Posterior vena cava (tissue), 2 donors: ENCODE measurements at regions of chr7 and their contacts with region 1.

Region 1: GRCh38 chr7:4267341-4268051 is 414.6 kb upstream of the FOXK1 start:
- DNase-seq: no peak

Region 2: DNA sequence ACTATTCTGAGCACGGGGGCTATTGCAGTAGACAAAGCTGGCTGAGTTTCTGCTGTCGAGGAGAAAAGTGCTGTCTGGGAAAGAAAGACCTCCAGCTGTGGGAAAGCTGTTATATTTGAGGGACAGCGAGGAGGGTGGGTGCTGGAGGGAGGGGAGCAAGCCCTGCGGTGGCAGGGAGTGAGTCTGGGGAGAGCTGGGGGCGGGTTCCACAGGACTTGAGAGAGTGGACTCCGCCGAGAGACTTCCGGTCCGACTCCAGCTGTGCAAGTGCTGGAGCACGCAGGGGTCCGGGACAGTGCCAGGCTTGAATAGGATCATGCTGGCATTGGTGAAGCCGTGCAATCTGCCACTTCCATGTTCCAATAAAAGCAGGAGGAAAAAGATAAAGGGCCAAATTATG is 187.5 kb before region 1 on chr7:
- intact Hi-C with region 1: no loop called
- DNase-seq: no peak

Region 3: DNA sequence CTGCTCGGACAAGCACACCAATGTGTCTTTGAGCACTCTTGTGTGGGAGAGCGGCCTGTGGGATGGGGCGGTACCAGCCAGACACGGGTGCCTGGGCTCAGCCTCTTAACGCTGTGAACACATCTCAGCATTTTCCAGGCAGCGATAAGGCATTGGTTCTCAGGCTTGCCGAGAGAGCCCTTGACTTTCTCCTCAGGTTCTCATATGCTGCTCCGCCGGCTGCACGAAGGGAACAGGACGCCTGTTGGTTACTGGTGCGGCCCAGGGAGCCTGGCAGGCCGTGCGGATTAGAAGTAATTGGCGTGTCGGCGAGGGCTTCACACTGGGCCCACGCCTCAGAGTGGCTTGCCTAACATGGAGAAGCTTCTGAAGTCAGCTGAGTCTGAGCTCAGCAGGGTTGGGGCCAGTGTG is 42.1 kb before region 1 on chr7:
- intact Hi-C with region 1: loop called in 1 of 2 experiments (anchors 1 kb)
- DNase-seq: no peak